ENCODE measurements at regions of chr1 and their contacts with region 1.

Region 1: DNA sequence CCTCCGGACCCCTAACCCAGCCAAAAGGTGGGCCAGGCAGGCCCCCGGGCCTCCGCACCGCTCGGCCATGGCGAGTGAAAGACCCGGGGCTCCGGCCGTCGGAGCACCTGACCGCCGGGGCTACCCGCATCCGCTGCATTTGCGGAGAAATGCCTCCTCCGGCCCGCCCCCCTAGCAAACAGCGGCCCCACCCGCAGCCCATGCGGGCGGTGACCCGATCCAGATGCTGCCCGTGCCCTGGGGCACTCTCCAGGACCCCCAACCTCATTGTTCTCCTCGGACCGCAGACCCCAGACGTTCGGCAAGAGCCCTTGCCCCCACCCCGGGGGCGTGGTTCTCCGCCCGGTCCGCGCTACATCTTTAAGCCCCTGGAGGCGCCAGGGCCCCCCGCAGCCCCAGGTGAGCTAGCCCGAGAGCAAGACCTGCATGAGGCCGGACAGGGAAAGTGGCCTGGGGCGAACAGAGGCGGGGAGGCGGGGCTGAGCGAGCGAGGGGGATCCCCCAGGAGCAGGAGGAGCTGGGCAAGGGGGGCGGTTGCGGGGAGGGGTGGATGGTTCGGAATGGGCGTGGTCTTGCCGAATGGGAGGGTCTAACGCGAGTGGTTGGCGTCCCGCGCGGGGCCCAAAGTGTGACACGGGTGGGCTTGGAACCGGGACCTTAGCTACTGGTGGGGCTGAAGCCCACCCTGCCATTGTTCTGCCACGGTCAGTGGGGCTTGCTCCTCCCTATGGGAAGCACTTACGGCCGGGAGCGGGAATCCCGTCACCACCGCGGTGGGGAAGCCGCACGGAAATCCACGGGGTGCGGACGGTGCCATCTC is 6.3 kb upstream of the CRYBG2 start:
- DNase-seq: no peak

Region 2: DNA sequence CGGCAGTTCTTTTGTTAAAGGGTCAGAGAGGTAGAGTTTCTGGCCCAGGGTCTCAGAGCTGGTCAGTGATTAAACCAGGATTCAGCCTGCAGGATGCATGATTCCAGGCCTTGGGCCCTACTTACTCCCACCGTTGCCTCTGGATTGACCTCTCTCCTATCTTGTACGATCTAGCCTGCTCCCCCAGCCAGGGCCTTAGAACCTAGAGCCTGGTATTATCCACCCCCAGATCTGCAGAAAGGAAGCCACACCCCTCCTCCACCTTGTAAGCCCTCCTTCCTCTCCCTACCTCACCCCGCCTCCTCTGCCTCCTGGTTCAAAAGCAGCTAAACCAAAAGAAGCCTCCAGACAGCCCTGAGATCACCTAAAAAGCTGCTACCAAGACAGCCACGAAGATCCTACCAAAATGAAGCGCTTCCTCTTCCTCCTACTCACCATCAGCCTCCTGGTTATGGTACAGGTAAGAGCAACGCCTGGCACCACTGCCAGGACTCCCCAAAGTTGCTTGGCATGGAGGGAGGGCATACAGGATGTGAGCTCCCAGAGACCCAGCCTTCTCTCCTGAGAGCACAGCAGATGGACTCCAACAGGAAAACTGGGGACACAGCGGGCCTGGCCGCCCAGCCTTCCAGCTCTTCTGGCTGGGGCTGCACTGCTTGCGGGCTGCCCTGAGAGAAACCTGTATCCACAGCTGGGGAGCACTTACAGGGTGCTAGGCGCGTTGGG is 42.4 kb before region 1 on chr1 and contains the start of gene CD52:
- intact Hi-C with region 1: no loop called
- DNase-seq: no peak
- total RNA-seq, gene CD52: 7.0 to 16.1 TPM

Region 3: DNA sequence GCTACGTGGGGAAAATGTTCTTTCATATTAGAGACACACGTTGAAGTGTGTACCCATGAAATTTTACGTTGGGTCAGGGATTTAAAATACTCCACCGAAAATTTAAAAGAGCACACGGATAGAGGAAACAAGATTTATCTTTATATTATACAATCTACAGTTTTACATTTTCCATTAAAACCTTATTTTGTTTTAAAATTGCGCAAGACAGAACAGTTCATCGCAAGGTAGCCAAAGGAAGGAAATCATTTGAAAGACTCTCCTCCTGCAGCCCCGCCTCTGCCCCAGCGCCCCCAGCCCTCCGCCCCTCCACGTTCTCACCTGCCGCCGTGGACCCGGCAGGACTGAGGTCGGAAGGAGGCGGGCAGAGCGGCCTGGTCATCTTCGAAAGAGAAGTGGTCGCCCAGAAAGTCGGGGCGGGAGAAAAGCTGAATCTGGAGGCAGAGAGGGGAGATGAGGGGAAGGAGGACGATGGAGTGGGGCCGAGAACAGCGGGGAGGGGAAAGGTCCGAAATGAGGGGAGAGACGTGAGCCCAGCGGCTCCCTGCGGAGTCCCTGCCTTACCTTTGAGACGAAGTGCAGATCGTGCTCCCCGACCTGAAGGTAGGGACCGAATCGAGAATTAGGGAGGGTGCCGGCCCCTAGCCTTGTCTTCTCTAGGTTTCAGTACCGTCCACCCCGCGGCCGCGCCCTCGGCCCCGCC is 24.3 kb before region 1 on chr1:
- intact Hi-C with region 1: no loop called
- DNase-seq: peak; percentile 85

Region 4: GRCh38 chr1:26346550-26347033 is 13.6 kb before region 1 on chr1:
- intact Hi-C with region 1: loop called in 1 of 2 experiments (anchors 1 kb)
- DNase-seq: no peak

Measured in posterior vena cava (tissue), 2 donors.